ENCODE measurements at regions of chr10 and their contacts with region 1.

Region 1: GRCh38 chr10:86439544-86439943 is 72.9 kb upstream of the GRID1 start:
- DNase-seq: peak; percentile 97
- ATAC-seq: peak; percentile 75
- H3K4me3 ChIP-seq: no peak overlapping the region
- H3K27ac ChIP-seq: no peak overlapping the region
- H3K4me1 ChIP-seq: peaks cover 8% of the 10 kb centered on the region
- H3K27me3 ChIP-seq: no peaks in the 10 kb centered on the region
- CTCF ChIP-seq: no peak
- POLR2A ChIP-seq: no peak
- RAD21 ChIP-seq: no peak

Region 2: GRCh38 chr10:86472061-86472460 is 32.5 kb after region 1 on chr10:
- CTCF ChIA-PET with region 1: no interaction called
- POLR2A ChIA-PET with region 1: no interaction called
- dilution Hi-C with region 1: no loop called
- in situ Hi-C with region 1: no loop called
- intact Hi-C with region 1: loop called (anchors 1 kb)
- DNase-seq: no peak
- ATAC-seq: no peak
- H3K4me3 ChIP-seq: no peak overlapping the region
- H3K27ac ChIP-seq: no peak overlapping the region
- H3K4me1 ChIP-seq: peaks cover 3% of the 10 kb centered on the region; the same call in 1 of the 2 replicates
- H3K27me3 ChIP-seq: no peaks in the 10 kb centered on the region
- CTCF ChIP-seq: no peak
- POLR2A ChIP-seq: no peak
- RAD21 ChIP-seq: no peak

Region 3: GRCh38 chr10:86775056-86775869 is 335.7 kb after region 1 on chr10:
- CTCF ChIA-PET with region 1: no interaction called
- POLR2A ChIA-PET with region 1: no interaction called
- dilution Hi-C with region 1: no loop called
- in situ Hi-C with region 1: no loop called
- intact Hi-C with region 1: no loop called
- DNase-seq: peak; percentile 33
- ATAC-seq: peak; percentile 53
- H3K4me3 ChIP-seq: no peak overlapping the region
- H3K27ac ChIP-seq: peak overlapping the region; percentile 36; the same call in 1 of the 2 replicates
- H3K4me1 ChIP-seq: peaks cover 14% of the 10 kb centered on the region
- H3K27me3 ChIP-seq: no peaks in the 10 kb centered on the region
- CTCF ChIP-seq: no peak
- POLR2A ChIP-seq: no peak
- RAD21 ChIP-seq: no peak

Measured in IMR-90 (cell line).